Activated CD8-positive, alpha-beta memory T cell treated with anti-CD3 and anti-CD28 coated beads, Interleukin-2, amount 10 ng/mL, durations not matched to agents 7 days and 5 days (primary cell): ENCODE measurements at regions of chr13 and their contacts with region 1.

Region 1: DNA sequence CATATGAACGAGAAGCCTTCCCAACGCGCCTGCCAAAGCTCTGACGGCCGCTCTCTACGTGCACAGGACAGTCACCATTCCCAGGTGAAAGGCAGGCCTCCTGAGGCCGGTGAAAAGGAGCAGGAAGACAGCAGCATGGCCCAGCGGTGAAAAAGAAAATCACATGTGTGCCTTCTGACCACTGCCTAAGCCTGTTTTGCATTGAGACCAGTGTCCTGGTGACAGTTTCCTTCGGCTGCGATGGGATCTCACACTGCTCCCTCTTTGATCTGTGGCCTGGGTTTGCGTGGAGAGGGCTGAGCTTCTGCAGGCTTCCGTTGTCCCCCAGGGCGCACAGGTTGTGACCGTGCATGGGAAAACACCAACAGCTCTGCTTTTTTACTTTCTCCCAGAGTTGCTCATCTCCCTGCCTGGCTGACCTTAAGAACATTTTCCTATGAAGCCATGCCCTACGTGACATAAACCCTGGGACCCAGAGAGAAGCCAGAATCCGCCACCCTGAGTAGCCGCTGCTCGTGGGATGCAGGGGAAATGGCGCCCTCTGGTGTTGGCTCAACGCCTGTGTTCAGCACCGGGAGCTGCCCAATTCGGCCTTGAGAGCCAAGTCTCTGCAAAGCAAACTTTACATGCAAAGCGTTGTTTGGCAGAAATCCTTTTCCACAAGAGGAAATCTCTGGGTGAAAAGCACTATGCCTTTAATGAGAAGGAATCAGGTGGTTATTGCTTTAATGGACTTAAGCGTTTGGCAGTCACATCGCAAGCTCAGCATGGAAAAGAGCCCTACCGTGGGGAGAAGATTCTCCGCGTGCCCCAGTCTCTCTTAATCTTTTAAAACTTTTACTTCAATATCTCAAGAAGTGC is 112.2 kb upstream of the GPR12 start:
- DNase-seq: peak; percentile 72
- ATAC-seq: peak; percentile 55
- H3K4me3 Mint-ChIP-seq: no peak overlapping the region
- H3K27ac Mint-ChIP-seq: no peak overlapping the region
- H3K4me1 Mint-ChIP-seq: no peaks in the 10 kb centered on the region
- H3K27me3 Mint-ChIP-seq: peaks cover 5% of the 10 kb centered on the region

Region 2: GRCh38 chr13:26707122-26708006 is 165.4 kb before region 1 on chr13:
- CTCF ChIA-PET with region 1: interaction called, 45 read pairs
- DNase-seq: peak; percentile 65
- ATAC-seq: peak; percentile 72
- H3K4me3 Mint-ChIP-seq: no peak overlapping the region
- H3K27ac Mint-ChIP-seq: no peak overlapping the region
- H3K4me1 Mint-ChIP-seq: peaks cover 7% of the 10 kb centered on the region
- H3K27me3 Mint-ChIP-seq: peaks cover 17% of the 10 kb centered on the region

Region 3: GRCh38 chr13:26887594-26887993 is 14.8 kb after region 1 on chr13:
- CTCF ChIA-PET with region 1: interaction called, 14 read pairs
- DNase-seq: no peak
- ATAC-seq: no peak
- H3K4me3 Mint-ChIP-seq: no peak overlapping the region
- H3K27ac Mint-ChIP-seq: no peak overlapping the region
- H3K4me1 Mint-ChIP-seq: no peaks in the 10 kb centered on the region
- H3K27me3 Mint-ChIP-seq: peaks cover 7% of the 10 kb centered on the region